ENCODE measurements at regions of chr13 and their contacts with region 1.

Region 1: DNA sequence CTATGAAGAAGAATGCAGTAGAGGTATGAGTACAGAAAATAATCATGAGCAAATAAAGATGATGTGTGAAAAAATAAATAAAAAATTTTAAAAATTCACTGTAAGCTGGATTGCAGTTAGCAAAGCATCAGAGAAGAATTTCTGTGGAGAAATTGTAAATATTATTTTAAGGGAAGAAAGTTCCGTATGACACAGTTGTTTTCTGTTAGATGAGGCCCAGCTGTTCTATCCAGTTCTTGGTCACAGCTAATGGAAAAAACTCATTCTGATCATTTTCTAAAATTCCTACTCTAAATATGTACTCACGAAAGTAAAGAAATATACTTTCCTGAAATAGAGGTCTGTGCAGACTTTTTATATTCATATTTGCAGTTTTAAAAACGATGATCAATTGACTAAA is 578.8 kb downstream of the DCT start:
- DNase-seq: peak; percentile 67
- ATAC-seq: peak; percentile 64
- H3K4me3 ChIP-seq: no peak overlapping the region
- H3K27ac ChIP-seq: peak overlapping the region; percentile 79; the same call in 1 of the 2 replicates
- H3K4me1 ChIP-seq: peaks cover 7% of the 10 kb centered on the region
- H3K27me3 ChIP-seq: no peaks in the 10 kb centered on the region
- CTCF ChIP-seq: no peak
- POLR2A ChIP-seq: no peak
- RAD21 ChIP-seq: no peak

Region 2: DNA sequence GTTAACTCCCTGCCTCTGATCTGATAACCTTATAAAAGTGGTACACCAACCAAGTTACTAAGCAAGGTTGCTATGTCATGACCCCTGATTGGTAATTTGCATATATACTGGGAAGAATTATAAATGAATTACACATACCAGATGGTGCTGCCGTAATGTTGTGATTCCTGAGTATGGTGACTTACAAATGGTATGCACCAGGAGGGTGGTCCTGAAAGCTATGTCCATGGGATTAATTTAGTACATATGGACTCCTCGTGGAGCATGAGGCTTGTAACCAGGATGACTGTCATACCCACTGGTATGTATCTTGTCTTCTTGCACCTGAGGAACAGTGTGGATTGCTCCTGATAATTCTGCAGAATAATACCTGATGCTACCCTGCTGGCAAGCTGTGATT is 433.6 kb before region 1 on chr13:
- CTCF ChIA-PET with region 1: no interaction called
- POLR2A ChIA-PET with region 1: interaction called, 13 read pairs
- dilution Hi-C with region 1: no loop called
- in situ Hi-C with region 1: no loop called
- intact Hi-C with region 1: no loop called
- DNase-seq: no peak
- ATAC-seq: no peak
- H3K4me3 ChIP-seq: no peak overlapping the region
- H3K27ac ChIP-seq: no peak overlapping the region
- H3K4me1 ChIP-seq: no peaks in the 10 kb centered on the region
- H3K27me3 ChIP-seq: no peaks in the 10 kb centered on the region
- CTCF ChIP-seq: no peak
- POLR2A ChIP-seq: no peak
- RAD21 ChIP-seq: no peak

Measured in IMR-90 (cell line).